ENCODE measurements at regions of chr19 and their contacts with region 1.

Region 1: GRCh38 chr19:44890366-44891015 is 563 bp upstream of the TOMM40 start:
- DNase-seq: peak in 4 of 9 experiments; percentile 100
- ATAC-seq: peak; percentile 78
- H3K4me3 ChIP-seq: peak overlapping the region; percentile 58 to 76
- H3K4me3 Mint-ChIP-seq: peak overlapping the region; percentile 85
- H3K27ac ChIP-seq: peak overlapping the region; percentile 89 to 98
- H3K27ac Mint-ChIP-seq: peak overlapping the region; percentile 94
- H3K4me1 ChIP-seq: peaks cover 20% of the 10 kb centered on the region
- H3K4me1 Mint-ChIP-seq: peaks cover 27% of the 10 kb centered on the region
- H3K27me3 ChIP-seq: no peaks in the 10 kb centered on the region
- H3K27me3 Mint-ChIP-seq: no peaks in the 10 kb centered on the region
- CTCF ChIP-seq: no peak

Region 2: GRCh38 chr19:44164673-44165512 is 725.6 kb before region 1 on chr19 and contains the start of gene ZNF226:
- CTCF ChIA-PET with region 1: no interaction called
- POLR2A ChIA-PET with region 1: no interaction called
- intact Hi-C with region 1: loop called in 1 of 2 experiments (anchors 10 kb)
- DNase-seq: peak; percentile 61 to 95 (median 82)
- ATAC-seq: peak; percentile 92
- H3K4me3 ChIP-seq: peak within 1 kb of the TSS; percentile 72 to 79
- H3K4me3 Mint-ChIP-seq: peak within 1 kb of the TSS; percentile 98
- H3K27ac ChIP-seq: peak within 1 kb of the TSS; percentile 69 to 90
- H3K27ac Mint-ChIP-seq: peak within 1 kb of the TSS; percentile 99
- H3K4me1 ChIP-seq: peaks cover 10% of the 10 kb centered on the region
- H3K4me1 Mint-ChIP-seq: peaks cover 31% of the 10 kb centered on the region
- H3K27me3 ChIP-seq: no peaks in the 10 kb centered on the region
- H3K27me3 Mint-ChIP-seq: no peaks in the 10 kb centered on the region
- CTCF ChIP-seq: no peak
- total RNA-seq, gene ZNF226: 9.1 to 10.8 TPM

Region 3: DNA sequence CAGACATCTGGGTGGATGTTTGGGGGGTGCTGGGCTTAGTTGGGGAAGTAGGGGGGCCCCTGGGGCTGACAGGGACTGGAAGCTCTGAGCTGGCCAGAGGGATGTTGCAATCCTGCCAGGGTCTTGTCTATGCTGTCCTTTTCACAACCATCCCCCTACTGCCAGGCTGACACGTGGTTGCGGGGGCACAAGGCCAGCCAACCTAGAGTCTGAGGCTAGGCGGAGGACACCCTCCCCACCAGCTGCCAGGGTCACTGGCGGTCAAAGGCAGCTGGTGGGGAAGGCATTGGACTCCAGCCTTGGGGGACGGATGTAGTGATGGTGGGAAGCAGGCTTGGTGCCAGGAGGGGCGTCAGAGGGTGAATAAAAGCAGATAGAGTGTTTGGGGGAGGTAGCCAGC is 22.4 kb after region 1 on chr19:
- CTCF ChIA-PET with region 1: no interaction called
- POLR2A ChIA-PET with region 1: interaction called, 5 read pairs
- intact Hi-C with region 1: loop called (anchors 1 to 2 kb)
- DNase-seq: no peak
- ATAC-seq: no peak
- H3K4me3 ChIP-seq: no peak overlapping the region
- H3K4me3 Mint-ChIP-seq: no peak overlapping the region
- H3K27ac ChIP-seq: no peak overlapping the region
- H3K27ac Mint-ChIP-seq: no peak overlapping the region
- H3K4me1 ChIP-seq: peaks cover 7% of the 10 kb centered on the region
- H3K4me1 Mint-ChIP-seq: peaks cover 6% of the 10 kb centered on the region
- H3K27me3 ChIP-seq: peaks cover 2 to 5% of the 10 kb centered on the region in 2 experiments
- H3K27me3 Mint-ChIP-seq: peaks cover 35% of the 10 kb centered on the region
- CTCF ChIP-seq: no peak

Region 4: GRCh38 chr19:45001087-45001739 is 110.7 kb after region 1 on chr19 and contains the start of gene RELB:
- CTCF ChIA-PET with region 1: no interaction called
- POLR2A ChIA-PET with region 1: no interaction called
- intact Hi-C with region 1: loop called in 1 of 2 experiments (anchors 2 kb)
- DNase-seq: peak; percentile 92 to 98 (median 95)
- ATAC-seq: peak; percentile 49
- H3K4me3 ChIP-seq: peak within 1 kb of the TSS; percentile 58 to 98
- H3K4me3 Mint-ChIP-seq: peak within 1 kb of the TSS; percentile 96
- H3K27ac ChIP-seq: peak within 1 kb of the TSS; percentile 98 to 100
- H3K27ac Mint-ChIP-seq: peak within 1 kb of the TSS; percentile 100
- H3K4me1 ChIP-seq: peaks cover 10% of the 10 kb centered on the region
- H3K4me1 Mint-ChIP-seq: peaks cover 16% of the 10 kb centered on the region
- H3K27me3 ChIP-seq: no peaks in the 10 kb centered on the region
- H3K27me3 Mint-ChIP-seq: no peaks in the 10 kb centered on the region
- CTCF ChIP-seq: no peak
- total RNA-seq, gene RELB: 168 to 179 TPM

Region 5: GRCh38 chr19:45092747-45093678 is 202.5 kb after region 1 on chr19 and contains the start of gene PPP1R37:
- CTCF ChIA-PET with region 1: no interaction called
- POLR2A ChIA-PET with region 1: no interaction called
- intact Hi-C with region 1: loop called in 1 of 2 experiments (anchors 2 kb)
- DNase-seq: peak; percentile 76 to 97 (median 92)
- ATAC-seq: peak; percentile 76
- H3K4me3 ChIP-seq: peak within 1 kb of the TSS; percentile 64 to 88
- H3K4me3 Mint-ChIP-seq: peak within 1 kb of the TSS; percentile 93
- H3K27ac ChIP-seq: peak within 1 kb of the TSS; percentile 84 to 96
- H3K27ac Mint-ChIP-seq: peak within 1 kb of the TSS; percentile 97
- H3K4me1 ChIP-seq: peaks cover 51% of the 10 kb centered on the region
- H3K4me1 Mint-ChIP-seq: peaks cover 67% of the 10 kb centered on the region
- H3K27me3 ChIP-seq: no peaks in the 10 kb centered on the region
- H3K27me3 Mint-ChIP-seq: no peaks in the 10 kb centered on the region
- CTCF ChIP-seq: peak; percentile 43
- total RNA-seq, gene PPP1R37: 19.3 to 19.9 TPM

Region 6: GRCh38 chr19:45730389-45731288 is 840.1 kb after region 1 on chr19 and contains the start of gene FBXO46:
- CTCF ChIA-PET with region 1: no interaction called
- POLR2A ChIA-PET with region 1: no interaction called
- intact Hi-C with region 1: loop called in 1 of 2 experiments (anchors 2 kb)
- DNase-seq: peak; percentile 82 to 97 (median 92)
- ATAC-seq: peak; percentile 98
- H3K4me3 ChIP-seq: peak within 1 kb of the TSS; percentile 74 to 91
- H3K4me3 Mint-ChIP-seq: peak within 1 kb of the TSS; percentile 97
- H3K27ac ChIP-seq: peak within 1 kb of the TSS; percentile 67 to 78
- H3K27ac Mint-ChIP-seq: peak within 1 kb of the TSS; percentile 92
- H3K4me1 ChIP-seq: peaks cover 19% of the 10 kb centered on the region
- H3K4me1 Mint-ChIP-seq: peaks cover 32% of the 10 kb centered on the region
- H3K27me3 ChIP-seq: no peaks in the 10 kb centered on the region
- H3K27me3 Mint-ChIP-seq: no peaks in the 10 kb centered on the region
- CTCF ChIP-seq: no peak
- total RNA-seq, gene FBXO46: 15.2 to 17.1 TPM

Measured in CD8-positive, alpha-beta T cell (primary cell).